CD8-positive, alpha-beta T cell (primary cell): ENCODE measurements at regions of chr18 and their contacts with region 1.

Region 1: GRCh38 chr18:35005963-35006577 is 35.1 kb upstream of the MAPRE2 start:
- DNase-seq: peak in 3 of 9 experiments; percentile 7 to 75 (median 66)
- ATAC-seq: peak; percentile 84
- H3K4me3 ChIP-seq: no peak overlapping the region
- H3K4me3 Mint-ChIP-seq: no peak overlapping the region
- H3K27ac ChIP-seq: no peak overlapping the region
- H3K27ac Mint-ChIP-seq: no peak overlapping the region
- H3K4me1 ChIP-seq: no peaks in the 10 kb centered on the region
- H3K4me1 Mint-ChIP-seq: no peaks in the 10 kb centered on the region
- H3K27me3 ChIP-seq: no peaks in the 10 kb centered on the region
- H3K27me3 Mint-ChIP-seq: no peaks in the 10 kb centered on the region
- CTCF ChIP-seq: peak; percentile 69

Region 2: DNA sequence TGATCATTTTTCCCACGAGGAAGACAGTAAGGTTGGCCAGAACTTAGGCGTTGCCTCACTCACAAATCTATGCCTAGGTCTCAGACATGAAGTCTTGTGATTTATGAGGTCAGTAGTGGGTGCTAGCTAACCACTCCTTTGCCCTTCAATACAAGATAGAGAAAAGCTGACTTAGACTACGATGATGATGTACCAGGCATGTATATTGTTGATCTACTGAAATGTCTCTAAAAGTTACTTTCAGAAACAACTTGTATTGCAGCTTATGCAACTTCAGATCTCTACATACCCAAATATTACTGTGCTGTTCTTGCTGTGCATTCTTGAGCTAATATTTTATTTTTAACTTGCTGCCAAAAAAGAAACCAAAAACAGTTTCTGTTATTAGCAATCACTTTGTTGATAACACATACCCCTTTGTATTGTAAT is 65.8 kb after region 1 on chr18:
- CTCF ChIA-PET with region 1: no interaction called
- POLR2A ChIA-PET with region 1: no interaction called
- intact Hi-C with region 1: loop called in 1 of 2 experiments (anchors 5 kb)
- DNase-seq: no peak
- ATAC-seq: no peak
- H3K4me3 ChIP-seq: no peak overlapping the region
- H3K4me3 Mint-ChIP-seq: no peak overlapping the region
- H3K27ac ChIP-seq: no peak overlapping the region
- H3K27ac Mint-ChIP-seq: peak overlapping the region; percentile 53
- H3K4me1 ChIP-seq: peaks cover 6% of the 10 kb centered on the region
- H3K4me1 Mint-ChIP-seq: peaks cover 70% of the 10 kb centered on the region
- H3K27me3 ChIP-seq: no peaks in the 10 kb centered on the region
- H3K27me3 Mint-ChIP-seq: no peaks in the 10 kb centered on the region
- CTCF ChIP-seq: no peak

Region 3: DNA sequence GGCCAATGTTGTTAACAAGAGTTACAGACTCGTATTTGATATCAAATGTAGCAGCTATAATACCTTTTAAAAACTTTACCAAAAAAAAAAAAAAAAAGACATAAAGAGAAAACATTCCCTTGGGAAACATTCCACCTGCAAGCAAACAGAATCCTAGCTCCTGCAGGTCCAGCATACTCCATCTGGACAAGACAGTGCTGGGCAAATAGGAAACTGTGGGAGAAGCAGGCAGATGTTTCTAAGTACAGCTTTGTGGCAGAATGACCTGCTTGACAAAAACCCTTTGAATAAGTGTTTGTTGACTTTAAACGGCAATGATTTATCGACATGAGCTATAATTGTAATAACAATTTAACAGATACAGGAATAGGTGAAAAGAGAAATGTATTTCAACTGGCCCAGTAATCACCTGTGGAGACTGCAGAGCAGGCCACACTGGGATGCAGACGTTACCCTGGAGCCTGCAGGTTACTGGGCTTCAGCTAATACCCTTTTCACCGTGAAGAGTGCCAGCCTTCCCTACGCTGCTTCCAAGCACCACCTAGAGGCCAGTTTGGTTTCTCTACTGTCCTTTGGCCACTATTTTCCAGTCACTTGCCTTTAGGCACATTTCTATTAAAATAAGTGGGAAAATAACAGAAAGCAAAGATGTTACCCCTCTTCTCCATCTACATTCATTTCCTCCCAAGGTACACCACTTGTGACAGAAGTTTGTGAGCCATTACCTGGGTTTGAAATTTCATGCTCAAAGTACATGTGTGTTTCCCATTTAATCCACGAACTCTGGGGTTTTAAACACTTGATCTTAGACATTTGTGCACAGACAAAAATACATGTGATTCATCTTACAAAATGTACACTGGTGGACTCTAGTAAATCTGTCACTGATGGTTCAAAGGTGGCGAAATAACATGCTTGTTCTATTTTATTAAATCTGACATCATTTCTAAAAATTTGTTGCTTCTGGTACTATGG is 137.8 kb after region 1 on chr18:
- CTCF ChIA-PET with region 1: interaction called, 23 read pairs
- POLR2A ChIA-PET with region 1: no interaction called
- intact Hi-C with region 1: loop called (anchors 1 kb)
- DNase-seq: peak in 8 of 9 experiments; percentile 15 to 63 (median 38)
- ATAC-seq: peak; percentile 65
- H3K4me3 ChIP-seq: no peak overlapping the region
- H3K4me3 Mint-ChIP-seq: no peak overlapping the region
- H3K27ac ChIP-seq: no peak overlapping the region
- H3K27ac Mint-ChIP-seq: no peak overlapping the region
- H3K4me1 ChIP-seq: no peaks in the 10 kb centered on the region
- H3K4me1 Mint-ChIP-seq: peaks cover 4% of the 10 kb centered on the region
- H3K27me3 ChIP-seq: no peaks in the 10 kb centered on the region
- H3K27me3 Mint-ChIP-seq: no peaks in the 10 kb centered on the region
- CTCF ChIP-seq: no peak

Region 4: GRCh38 chr18:35185771-35186170 is 179.7 kb after region 1 on chr18:
- CTCF ChIA-PET with region 1: no interaction called
- POLR2A ChIA-PET with region 1: no interaction called
- intact Hi-C with region 1: loop called in 1 of 2 experiments (anchors 1 kb)
- DNase-seq: peak in 2 of 9 experiments; percentile 17 to 28
- ATAC-seq: no peak
- H3K4me3 ChIP-seq: no peak overlapping the region
- H3K4me3 Mint-ChIP-seq: no peak overlapping the region
- H3K27ac ChIP-seq: no peak overlapping the region
- H3K27ac Mint-ChIP-seq: no peak overlapping the region
- H3K4me1 ChIP-seq: no peaks in the 10 kb centered on the region
- H3K4me1 Mint-ChIP-seq: no peaks in the 10 kb centered on the region
- H3K27me3 ChIP-seq: peaks cover 0 to 3% of the 10 kb centered on the region in 2 experiments
- H3K27me3 Mint-ChIP-seq: peaks cover 5% of the 10 kb centered on the region
- CTCF ChIP-seq: no peak